Right ventricle myocardium inferior (tissue), 1 donor: ENCODE measurements at regions of chr1 and their contacts with region 1.

Region 1: DNA sequence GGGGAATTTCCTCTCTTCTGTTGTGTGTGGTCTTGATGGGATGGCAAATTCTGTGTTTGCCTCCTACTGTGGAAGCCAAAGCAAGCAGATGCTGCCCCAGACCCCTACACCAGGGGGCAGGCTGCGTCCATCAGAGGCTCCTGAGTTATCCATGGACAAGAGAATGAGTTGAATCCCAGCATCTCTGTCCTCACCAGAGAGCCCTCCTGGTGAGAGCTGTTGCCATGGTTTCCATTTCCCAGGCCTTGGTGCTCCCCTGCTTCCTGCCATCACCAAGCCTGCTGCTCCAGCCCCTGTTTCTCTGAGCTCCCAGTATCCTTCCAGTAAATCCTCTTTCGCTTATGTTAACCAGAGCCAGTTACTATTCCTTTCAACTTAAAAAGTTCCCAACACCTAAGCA is 20.4 kb upstream of the GNG12 start:
- DNase-seq: no peak
- ATAC-seq: peak; percentile 83

Region 2: DNA sequence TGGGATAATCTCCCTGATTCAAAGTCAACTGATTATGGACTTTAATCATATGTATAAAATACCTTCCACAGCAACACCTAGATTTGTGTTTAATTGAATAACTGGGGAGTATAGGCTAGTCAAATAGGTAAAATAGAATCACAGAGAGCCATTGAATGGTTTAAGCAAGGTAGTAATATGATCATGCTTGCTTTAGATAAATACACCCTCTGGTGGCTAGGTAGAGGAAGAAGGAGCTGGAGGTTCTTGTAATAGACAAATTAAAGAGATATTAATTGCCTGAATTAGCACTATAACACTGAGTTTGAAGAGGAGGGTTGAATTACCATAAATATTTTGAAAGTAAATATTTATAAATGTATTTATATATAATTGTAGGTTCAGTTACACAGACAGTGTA is 156.4 kb after region 1 on chr1:
- intact Hi-C with region 1: loop called (anchors 1 kb)
- DNase-seq: no peak
- ATAC-seq: no peak

Region 3: DNA sequence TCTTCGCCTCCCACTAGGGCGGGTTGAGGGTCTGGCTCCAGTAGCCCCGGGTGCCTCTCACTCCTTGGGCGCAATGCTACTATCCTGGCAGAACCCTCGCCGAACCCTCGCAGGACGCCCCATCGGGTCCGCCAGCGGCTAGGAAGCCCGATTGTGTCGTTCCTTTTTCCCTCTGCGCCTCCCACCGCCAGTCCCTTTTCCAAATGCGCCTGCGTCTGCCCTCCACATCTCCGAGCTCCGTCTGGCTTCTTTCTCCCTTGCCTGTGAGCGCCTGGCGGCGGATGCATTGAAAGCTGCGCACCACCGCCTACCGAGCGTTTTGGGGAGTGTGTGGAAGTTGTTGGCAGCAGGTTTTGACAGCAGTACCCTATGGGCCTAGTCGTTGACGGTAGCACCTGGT is 197.8 kb after region 1 on chr1:
- intact Hi-C with region 1: loop called (anchors 5 kb)
- DNase-seq: peak; percentile 79
- ATAC-seq: peak; percentile 83

Region 4: GRCh38 chr1:68111519-68112436 is 258.1 kb after region 1 on chr1:
- intact Hi-C with region 1: loop called (anchors 2 kb)
- DNase-seq: peak; percentile 79
- ATAC-seq: peak; percentile 84

Region 5: DNA sequence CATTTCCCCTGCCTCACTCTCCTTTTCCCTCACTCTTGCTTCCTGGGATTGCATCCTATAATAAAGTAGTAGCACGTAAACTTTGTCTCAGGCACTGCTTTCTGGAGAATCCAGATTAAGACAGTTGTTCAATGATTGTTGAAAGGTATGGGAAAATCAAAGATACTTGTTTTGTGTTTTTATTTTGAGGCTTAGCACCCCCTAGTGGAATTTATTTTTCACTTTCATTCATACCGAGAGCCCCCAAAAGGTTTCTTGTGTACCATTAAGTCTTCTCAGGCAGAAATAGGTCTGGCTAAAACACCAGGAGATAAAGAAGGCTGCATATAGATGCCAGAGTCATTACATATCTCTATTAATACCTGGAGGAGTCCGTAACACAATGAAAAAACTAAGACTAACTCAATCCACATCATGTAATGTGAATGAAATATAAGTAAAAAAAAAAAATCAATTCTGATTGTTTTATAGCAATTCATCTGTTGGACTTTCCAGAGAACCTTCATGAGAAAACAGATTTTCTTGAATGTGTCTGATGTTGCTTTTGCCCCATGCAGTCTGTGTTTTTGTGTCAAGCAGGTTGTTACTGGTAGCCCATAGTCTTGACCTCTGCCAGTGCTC is 492.6 kb after region 1 on chr1:
- intact Hi-C with region 1: loop called (anchors 5 kb)
- DNase-seq: no peak
- ATAC-seq: no peak